ENCODE measurements at regions of chr18 and their contacts with region 1.

Region 1: DNA sequence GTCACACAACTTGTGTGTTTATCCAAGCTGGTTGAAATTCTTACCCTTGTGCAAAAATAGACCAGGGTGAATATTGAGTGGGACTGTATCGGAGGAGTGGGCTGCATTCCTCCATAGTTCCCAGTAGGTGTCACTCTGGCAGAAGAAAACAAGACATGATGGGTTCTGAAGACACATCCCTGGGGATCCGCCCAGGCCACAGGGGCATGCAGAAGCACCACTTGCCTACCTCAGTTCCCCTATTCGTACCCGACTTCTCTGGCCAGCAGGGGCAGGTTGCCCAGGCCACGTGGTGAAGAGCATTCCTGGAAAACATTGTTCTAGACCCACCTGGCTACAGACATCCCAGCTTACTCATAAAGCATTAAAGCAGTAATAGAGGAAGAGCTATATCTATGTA is 168.2 kb downstream of the FAM210A start:
- DNase-seq: peak in 5 of 14 experiments; percentile 16 to 61 (median 35)
- ATAC-seq: peak; percentile 63
- H3K4me3 ChIP-seq: no peak overlapping the region
- H3K4me3 Mint-ChIP-seq: no peak overlapping the region
- H3K27ac ChIP-seq: no peak overlapping the region
- H3K27ac Mint-ChIP-seq: peak overlapping the region; percentile 45
- H3K4me1 ChIP-seq: peaks cover 11% of the 10 kb centered on the region
- H3K4me1 Mint-ChIP-seq: peaks cover 41% of the 10 kb centered on the region
- H3K27me3 ChIP-seq: no peaks in the 10 kb centered on the region
- H3K27me3 Mint-ChIP-seq: no peaks in the 10 kb centered on the region
- CTCF ChIP-seq: peak; percentile 68

Region 2: GRCh38 chr18:13416208-13416607 is 141.9 kb before region 1 on chr18:
- CTCF ChIA-PET with region 1: no interaction called
- POLR2A ChIA-PET with region 1: no interaction called
- intact Hi-C with region 1: no loop called
- DNase-seq: peak in 1 of 14 experiments; percentile 22
- ATAC-seq: peak; percentile 74
- H3K4me3 ChIP-seq: no peak overlapping the region
- H3K4me3 Mint-ChIP-seq: no peak overlapping the region
- H3K27ac ChIP-seq: no peak overlapping the region
- H3K27ac Mint-ChIP-seq: no peak overlapping the region
- H3K4me1 ChIP-seq: peaks cover 30% of the 10 kb centered on the region
- H3K4me1 Mint-ChIP-seq: peaks cover 38% of the 10 kb centered on the region
- H3K27me3 ChIP-seq: no peaks in the 10 kb centered on the region
- H3K27me3 Mint-ChIP-seq: no peaks in the 10 kb centered on the region
- CTCF ChIP-seq: no peak

Region 3: DNA sequence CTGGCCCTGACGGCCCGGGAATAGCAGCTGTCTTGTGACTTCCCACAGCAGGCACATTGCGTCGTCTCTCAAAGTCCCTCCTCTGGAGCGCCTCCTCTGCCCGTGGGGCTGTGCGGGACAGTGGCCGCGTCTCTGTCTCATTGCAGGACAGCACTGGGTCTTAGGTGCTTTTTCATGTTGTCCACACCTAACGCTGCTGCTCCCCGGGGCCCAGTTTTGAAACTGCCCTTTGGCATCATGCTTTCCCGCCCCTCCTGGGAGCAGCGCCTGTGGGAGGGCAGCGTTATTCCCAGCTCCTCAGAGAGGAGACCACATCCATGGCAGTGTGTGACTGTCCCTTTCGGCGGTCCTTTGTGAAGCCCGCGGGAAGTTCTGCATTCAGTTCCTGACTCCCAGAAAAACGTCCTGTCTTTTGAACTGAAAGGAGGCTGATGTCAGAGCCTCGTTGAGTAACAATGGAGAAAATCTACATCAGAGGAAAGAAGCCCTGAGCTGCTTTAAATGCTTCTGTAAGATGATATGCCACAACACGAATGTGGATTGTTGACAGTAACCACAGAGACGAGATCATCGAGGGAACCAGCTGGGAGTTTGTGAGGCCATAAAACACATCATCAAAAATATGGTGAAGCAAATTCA is 57.8 kb before region 1 on chr18:
- CTCF ChIA-PET with region 1: interaction called, 3 read pairs
- POLR2A ChIA-PET with region 1: no interaction called
- intact Hi-C with region 1: loop called in 1 of 2 experiments (anchors 10 kb)
- DNase-seq: peak in 1 of 14 experiments; percentile 23
- ATAC-seq: peak; percentile 42
- H3K4me3 ChIP-seq: no peak overlapping the region
- H3K4me3 Mint-ChIP-seq: no peak overlapping the region
- H3K27ac ChIP-seq: no peak overlapping the region
- H3K27ac Mint-ChIP-seq: peak overlapping the region; percentile 73
- H3K4me1 ChIP-seq: peaks cover 18% of the 10 kb centered on the region
- H3K4me1 Mint-ChIP-seq: peaks cover 36% of the 10 kb centered on the region
- H3K27me3 ChIP-seq: no peaks in the 10 kb centered on the region
- H3K27me3 Mint-ChIP-seq: no peaks in the 10 kb centered on the region
- CTCF ChIP-seq: no peak

Region 4: GRCh38 chr18:13611601-13612195 is 53.6 kb after region 1 on chr18:
- CTCF ChIA-PET with region 1: interaction called, 11 read pairs
- POLR2A ChIA-PET with region 1: interaction called, 7 read pairs
- intact Hi-C with region 1: loop called in 1 of 2 experiments (anchors 5 kb)
- DNase-seq: peak in 1 of 14 experiments; percentile 12
- ATAC-seq: no peak
- H3K4me3 ChIP-seq: peak overlapping the region; percentile 51
- H3K4me3 Mint-ChIP-seq: peak overlapping the region; percentile 86
- H3K27ac ChIP-seq: peak overlapping the region; percentile 13 to 38
- H3K27ac Mint-ChIP-seq: peak overlapping the region; percentile 90
- H3K4me1 ChIP-seq: peaks cover 82% of the 10 kb centered on the region
- H3K4me1 Mint-ChIP-seq: peaks cover 85% of the 10 kb centered on the region
- H3K27me3 ChIP-seq: no peaks in the 10 kb centered on the region
- H3K27me3 Mint-ChIP-seq: no peaks in the 10 kb centered on the region
- CTCF ChIP-seq: no peak

Region 5: DNA sequence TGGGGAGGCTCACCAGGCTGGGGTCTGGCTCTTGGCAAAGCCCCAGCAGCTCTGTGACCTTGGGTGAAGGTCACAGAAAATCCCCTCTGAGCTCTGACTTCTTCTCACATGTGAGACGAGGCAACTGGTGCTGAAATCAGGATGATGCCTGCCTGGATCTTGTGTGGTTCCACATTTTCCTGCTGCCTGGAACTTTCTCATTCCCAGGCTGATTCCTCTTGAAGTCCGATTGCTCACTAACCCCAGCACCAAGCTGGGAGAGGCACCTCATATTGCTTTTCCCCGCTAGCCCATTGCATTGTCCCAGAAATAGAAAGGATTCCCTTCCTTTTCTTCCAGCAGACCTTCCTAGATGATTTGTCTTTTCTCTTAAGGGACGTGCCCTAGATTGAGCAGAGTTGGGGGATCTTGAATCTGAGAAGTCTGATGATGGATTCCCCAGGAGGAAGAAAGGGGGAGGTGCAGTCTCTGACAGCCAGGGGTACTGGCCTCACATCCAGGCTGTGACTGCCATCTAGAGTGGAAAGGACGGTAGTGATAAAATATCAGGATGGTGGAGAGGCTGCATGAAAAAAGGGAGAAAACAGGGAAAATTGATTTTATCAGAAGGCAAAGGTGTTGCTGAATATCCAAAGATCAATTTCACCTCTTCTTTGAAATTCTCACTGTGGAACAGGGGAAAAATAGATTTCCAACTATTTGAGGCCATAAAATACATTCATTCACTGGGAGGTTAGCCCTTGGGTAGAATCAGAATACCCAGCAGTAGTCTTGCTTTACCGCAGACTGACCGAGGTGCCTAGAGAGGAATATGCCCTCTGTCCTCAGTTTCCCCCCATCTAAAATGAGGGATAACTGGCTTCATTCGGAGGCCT is 72.0 kb after region 1 on chr18:
- CTCF ChIA-PET with region 1: interaction called, 3 read pairs
- POLR2A ChIA-PET with region 1: no interaction called
- intact Hi-C with region 1: loop called (anchors 1 to 2 kb)
- DNase-seq: peak in 10 of 14 experiments; percentile 25 to 74 (median 42)
- ATAC-seq: peak; percentile 97
- H3K4me3 ChIP-seq: no peak overlapping the region
- H3K4me3 Mint-ChIP-seq: no peak overlapping the region
- H3K27ac ChIP-seq: no peak overlapping the region
- H3K27ac Mint-ChIP-seq: peak overlapping the region; percentile 43
- H3K4me1 ChIP-seq: no peaks in the 10 kb centered on the region
- H3K4me1 Mint-ChIP-seq: peaks cover 24% of the 10 kb centered on the region
- H3K27me3 ChIP-seq: no peaks in the 10 kb centered on the region
- H3K27me3 Mint-ChIP-seq: no peaks in the 10 kb centered on the region
- CTCF ChIP-seq: peak; percentile 63

Region 6: GRCh38 chr18:13720123-13720522 is 162.0 kb after region 1 on chr18:
- CTCF ChIA-PET with region 1: no interaction called
- POLR2A ChIA-PET with region 1: no interaction called
- intact Hi-C with region 1: loop called in 1 of 2 experiments (anchors 5 kb)
- DNase-seq: no peak
- ATAC-seq: no peak
- H3K4me3 ChIP-seq: no peak overlapping the region
- H3K4me3 Mint-ChIP-seq: no peak overlapping the region
- H3K27ac ChIP-seq: no peak overlapping the region
- H3K27ac Mint-ChIP-seq: no peak overlapping the region
- H3K4me1 ChIP-seq: peaks cover 5% of the 10 kb centered on the region
- H3K4me1 Mint-ChIP-seq: peaks cover 44% of the 10 kb centered on the region
- H3K27me3 ChIP-seq: no peaks in the 10 kb centered on the region
- H3K27me3 Mint-ChIP-seq: no peaks in the 10 kb centered on the region
- CTCF ChIP-seq: no peak

Region 7: GRCh38 chr18:13735681-13736080 is 177.6 kb after region 1 on chr18:
- CTCF ChIA-PET with region 1: no interaction called
- POLR2A ChIA-PET with region 1: no interaction called
- intact Hi-C with region 1: no loop called
- DNase-seq: no peak
- ATAC-seq: no peak
- H3K4me3 ChIP-seq: no peak overlapping the region
- H3K4me3 Mint-ChIP-seq: no peak overlapping the region
- H3K27ac ChIP-seq: no peak overlapping the region
- H3K27ac Mint-ChIP-seq: no peak overlapping the region
- H3K4me1 ChIP-seq: no peaks in the 10 kb centered on the region
- H3K4me1 Mint-ChIP-seq: peaks cover 12% of the 10 kb centered on the region
- H3K27me3 ChIP-seq: no peaks in the 10 kb centered on the region
- H3K27me3 Mint-ChIP-seq: no peaks in the 10 kb centered on the region
- CTCF ChIP-seq: no peak

Region 8: GRCh38 chr18:13823707-13824395 is 265.7 kb after region 1 on chr18 and contains the start of gene MC5R:
- CTCF ChIA-PET with region 1: no interaction called
- POLR2A ChIA-PET with region 1: no interaction called
- intact Hi-C with region 1: loop called in 1 of 2 experiments (anchors 5 kb)
- DNase-seq: peak; percentile 31 to 83 (median 62)
- ATAC-seq: peak; percentile 97
- H3K4me3 ChIP-seq: peak within 1 kb of the TSS; percentile 19
- H3K4me3 Mint-ChIP-seq: peak within 1 kb of the TSS; percentile 54
- H3K27ac ChIP-seq: no peak within 1 kb of the TSS
- H3K27ac Mint-ChIP-seq: no peak within 1 kb of the TSS
- H3K4me1 ChIP-seq: peaks cover 7% of the 10 kb centered on the region
- H3K4me1 Mint-ChIP-seq: peaks cover 7% of the 10 kb centered on the region
- H3K27me3 ChIP-seq: peaks cover 10 to 27% of the 10 kb centered on the region in 2 experiments
- H3K27me3 Mint-ChIP-seq: peaks cover 34% of the 10 kb centered on the region
- CTCF ChIP-seq: peak; percentile 73
- total RNA-seq, gene MC5R: not detected